Mammary epithelial cell (primary cell): ENCODE measurements at regions of chr6 and their contacts with region 1.

Region 1: GRCh38 chr6:104625536-104625935 is 234.2 kb downstream of the HACE1 start:
- DNase-seq: peak; percentile 94
- H3K4me3 ChIP-seq: no peak overlapping the region
- H3K27ac ChIP-seq: peak overlapping the region; percentile 80
- H3K4me1 ChIP-seq: peaks cover 36% of the 10 kb centered on the region
- H3K27me3 ChIP-seq: no peaks in the 10 kb centered on the region
- CTCF ChIP-seq: no peak

Region 2: DNA sequence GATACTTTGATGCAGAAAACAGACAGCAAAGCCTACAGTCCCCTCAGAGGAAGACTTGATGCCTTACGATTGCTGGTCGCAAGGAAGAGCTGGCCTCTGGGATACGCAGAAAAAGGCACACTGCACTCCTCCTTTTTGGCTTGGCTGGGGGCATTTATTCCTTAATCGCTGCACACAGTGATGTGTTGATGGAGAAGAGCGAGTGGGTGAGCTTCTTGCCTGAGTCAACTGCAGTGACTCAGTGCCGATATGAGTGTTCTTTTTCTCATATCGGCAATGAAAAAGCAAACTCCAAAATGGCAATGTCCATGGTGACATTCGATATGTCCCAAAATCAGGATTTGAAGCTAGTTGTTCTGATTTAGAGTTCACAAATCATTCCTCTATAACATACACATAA is 560.7 kb before region 1 on chr6:
- CTCF ChIA-PET with region 1: no interaction called
- dilution Hi-C with region 1: no loop called
- in situ Hi-C with region 1: no loop called
- intact Hi-C with region 1: loop called (anchors 5 kb)
- DNase-seq: no peak
- H3K4me3 ChIP-seq: no peak overlapping the region
- H3K27ac ChIP-seq: no peak overlapping the region
- H3K4me1 ChIP-seq: no peaks in the 10 kb centered on the region
- H3K27me3 ChIP-seq: no peaks in the 10 kb centered on the region
- CTCF ChIP-seq: no peak